Thyroid gland (tissue), 4 donors: ENCODE measurements at regions of chr2 and their contacts with region 1.

Region 1: DNA sequence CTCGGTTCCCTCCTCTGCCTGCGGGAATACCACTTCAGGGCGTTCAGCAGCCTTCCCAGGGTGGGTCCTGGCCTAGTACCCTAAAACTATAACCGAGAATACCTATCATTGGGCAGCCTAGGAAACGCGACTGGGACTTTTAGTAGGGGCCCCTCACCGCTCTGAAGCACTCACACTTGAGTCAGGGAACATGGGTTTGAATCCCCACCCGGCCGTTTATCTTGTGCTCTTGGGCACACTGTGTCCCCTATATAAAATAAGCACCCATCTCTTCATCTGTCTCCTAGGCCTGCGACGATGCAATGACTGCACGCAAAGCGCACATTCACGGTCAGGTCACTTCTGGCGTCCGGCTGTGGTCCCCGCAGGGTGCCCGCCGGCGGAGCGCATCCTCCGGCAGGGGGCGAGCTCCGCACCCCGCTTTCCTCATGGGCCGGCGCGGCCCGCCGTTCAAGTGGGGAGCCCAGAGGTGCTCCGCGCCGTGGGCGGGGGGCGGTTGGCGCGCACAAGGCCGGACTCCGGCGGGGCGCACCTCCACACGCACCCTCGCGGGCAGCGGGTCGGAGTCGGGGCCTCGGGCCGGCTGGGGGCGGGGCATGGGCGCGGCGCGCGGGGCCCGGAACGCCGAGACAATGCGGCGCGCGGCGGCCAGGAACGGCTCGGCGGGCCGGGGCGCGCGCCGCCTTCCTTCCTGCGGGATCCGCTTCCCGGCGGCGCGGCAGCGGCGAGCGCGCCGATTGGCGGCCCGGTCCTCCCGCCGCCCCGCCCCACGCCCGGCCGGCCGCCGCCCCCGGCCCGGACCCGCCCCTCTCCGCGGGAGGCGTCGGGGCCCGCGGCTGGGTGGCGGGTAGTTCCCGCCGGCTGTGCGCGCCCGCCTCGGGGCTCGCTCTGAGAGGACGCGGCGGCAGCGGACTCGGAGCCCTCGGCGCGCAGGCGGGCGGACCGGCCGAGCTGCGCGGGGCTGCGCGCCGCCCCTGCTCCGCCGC is at the start of gene ASAP2:
- DNase-seq: peak; percentile 70 to 77
- H3K4me3 ChIP-seq: peak within 1 kb of the TSS; percentile 78 to 88 (median 86)
- H3K27ac ChIP-seq: peak within 1 kb of the TSS; percentile 93 to 95 (median 95)
- H3K4me1 ChIP-seq: peaks cover 11 to 27% of the 10 kb centered on the region in 2 donors
- H3K27me3 ChIP-seq: no peaks in the 10 kb centered on the region
- CTCF ChIP-seq: peak; percentile 48 to 86 (median 77)
- POLR2A ChIP-seq: peak in 1 of 2 donors; percentile 82
- total RNA-seq, gene ASAP2: 40.3 to 55.3 (median 47.3) TPM

Region 2: GRCh38 chr2:9336576-9337314 is 130.5 kb after region 1 on chr2:
- intact Hi-C with region 1: loop called (anchors 5 kb)
- DNase-seq: peak; percentile 91 to 92
- H3K4me3 ChIP-seq: no peak overlapping the region
- H3K27ac ChIP-seq: peak overlapping the region; percentile 57 to 72 (median 66)
- H3K4me1 ChIP-seq: peaks cover 39 to 58% of the 10 kb centered on the region in 2 donors
- H3K27me3 ChIP-seq: no peaks in the 10 kb centered on the region
- CTCF ChIP-seq: no peak
- POLR2A ChIP-seq: no peak